ENCODE measurements at regions of chr3 and their contacts with region 1.

Region 1: GRCh38 chr3:82133070-82133606 is 371.7 kb upstream of the GBE1 start:
- DNase-seq: peak; percentile 15 to 64
- H3K4me3 ChIP-seq: no peak overlapping the region
- H3K27ac ChIP-seq: no peak overlapping the region
- H3K4me1 ChIP-seq: no peaks in the 10 kb centered on the region
- H3K27me3 ChIP-seq: no peaks in the 10 kb centered on the region
- CTCF ChIP-seq: peak; percentile 48 to 78 (median 58)
- EP300 ChIP-seq: no peak
- POLR2A ChIP-seq: no peak
- RAD21 ChIP-seq: peak; percentile 70 to 77

Region 2: GRCh38 chr3:82122554-82123345 is 10.4 kb before region 1 on chr3:
- CTCF ChIA-PET with region 1: interaction called, 18 read pairs
- POLR2A ChIA-PET with region 1: no interaction called
- DNase-seq: no peak
- H3K4me3 ChIP-seq: no peak overlapping the region
- H3K27ac ChIP-seq: no peak overlapping the region
- H3K4me1 ChIP-seq: no peaks in the 10 kb centered on the region
- H3K27me3 ChIP-seq: no peaks in the 10 kb centered on the region
- CTCF ChIP-seq: no peak
- EP300 ChIP-seq: no peak
- POLR2A ChIP-seq: no peak
- RAD21 ChIP-seq: no peak

Region 3: GRCh38 chr3:82143661-82144412 is 10.7 kb after region 1 on chr3:
- CTCF ChIA-PET with region 1: interaction called, 28 read pairs
- POLR2A ChIA-PET with region 1: no interaction called
- DNase-seq: no peak
- H3K4me3 ChIP-seq: no peak overlapping the region
- H3K27ac ChIP-seq: no peak overlapping the region
- H3K4me1 ChIP-seq: 0 out of 7 replicates have a peak, but pooled peaks cover 0 to 2% (median 0%) of the 10 kb centered on the region in 4 experiments
- H3K27me3 ChIP-seq: no peaks in the 10 kb centered on the region
- CTCF ChIP-seq: no peak
- EP300 ChIP-seq: no peak
- POLR2A ChIP-seq: no peak
- RAD21 ChIP-seq: no peak

Region 4: DNA sequence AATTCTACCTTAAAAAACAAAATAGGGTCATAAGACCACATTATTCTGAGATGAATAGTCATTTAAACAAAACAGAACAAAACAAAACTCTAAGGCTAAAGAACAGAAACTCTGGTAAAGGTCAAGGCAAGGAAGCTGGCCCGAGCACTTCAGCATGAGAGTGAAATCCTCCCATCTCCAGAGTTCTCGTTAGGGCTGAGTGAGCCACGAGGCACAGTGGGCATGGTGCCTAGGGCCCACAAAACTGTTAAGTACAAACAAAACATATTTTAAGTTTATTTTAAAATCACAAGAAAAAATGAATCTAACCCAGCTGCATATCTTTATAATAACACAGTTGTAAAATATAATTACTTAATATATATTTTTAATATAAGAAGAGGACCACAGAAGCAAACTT is 46.2 kb after region 1 on chr3:
- CTCF ChIA-PET with region 1: no interaction called
- POLR2A ChIA-PET with region 1: no interaction called
- DNase-seq: no peak
- H3K4me3 ChIP-seq: no peak overlapping the region
- H3K27ac ChIP-seq: no peak overlapping the region
- H3K4me1 ChIP-seq: no peaks in the 10 kb centered on the region
- H3K27me3 ChIP-seq: no peaks in the 10 kb centered on the region
- CTCF ChIP-seq: no peak
- EP300 ChIP-seq: no peak
- POLR2A ChIP-seq: no peak
- RAD21 ChIP-seq: no peak

Region 5: DNA sequence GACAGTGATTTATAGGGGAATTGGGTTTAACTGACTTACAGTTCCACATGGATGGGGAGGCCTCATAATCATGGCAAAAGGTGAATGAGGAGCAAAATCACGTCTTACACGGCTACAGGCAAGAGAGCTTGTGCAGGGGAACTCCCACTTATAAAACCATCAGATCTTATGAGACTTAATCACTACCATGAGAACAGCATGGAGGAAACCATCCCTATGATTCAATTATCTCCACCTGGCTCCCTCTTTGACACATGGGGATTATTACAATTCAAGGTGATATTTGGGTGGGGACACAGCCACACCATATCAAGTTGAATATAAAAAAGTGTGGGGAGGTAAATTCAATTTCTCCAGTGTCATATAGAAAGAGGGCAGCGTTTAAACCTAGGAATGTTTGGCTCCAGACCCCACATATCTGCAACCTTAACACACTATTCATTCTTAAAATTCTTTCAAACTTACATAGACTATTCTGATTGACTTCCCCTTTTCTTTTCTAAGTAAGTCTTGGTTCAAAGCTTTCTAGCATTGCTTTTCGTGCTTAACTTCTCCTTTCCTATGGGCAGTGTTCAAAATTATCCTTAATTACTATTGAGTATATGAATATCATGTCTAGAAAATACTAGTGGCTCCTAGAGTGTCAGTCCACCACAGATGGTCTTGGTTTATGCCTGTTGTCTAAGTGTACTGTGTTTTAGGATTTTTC is 75.0 kb after region 1 on chr3:
- CTCF ChIA-PET with region 1: no interaction called
- POLR2A ChIA-PET with region 1: no interaction called
- DNase-seq: no peak
- H3K4me3 ChIP-seq: no peak overlapping the region
- H3K27ac ChIP-seq: no peak overlapping the region
- H3K4me1 ChIP-seq: no peaks in the 10 kb centered on the region
- H3K27me3 ChIP-seq: no peaks in the 10 kb centered on the region
- CTCF ChIP-seq: no peak
- EP300 ChIP-seq: no peak
- POLR2A ChIP-seq: no peak
- RAD21 ChIP-seq: no peak

Region 6: GRCh38 chr3:82224661-82225060 is 91.5 kb after region 1 on chr3:
- CTCF ChIA-PET with region 1: no interaction called
- POLR2A ChIA-PET with region 1: no interaction called
- DNase-seq: no peak
- H3K4me3 ChIP-seq: no peak overlapping the region
- H3K27ac ChIP-seq: no peak overlapping the region
- H3K4me1 ChIP-seq: no peaks in the 10 kb centered on the region
- H3K27me3 ChIP-seq: no peaks in the 10 kb centered on the region
- CTCF ChIP-seq: no peak
- EP300 ChIP-seq: no peak
- POLR2A ChIP-seq: no peak
- RAD21 ChIP-seq: no peak

Region 7: GRCh38 chr3:82306189-82306588 is 173.1 kb after region 1 on chr3:
- CTCF ChIA-PET with region 1: no interaction called
- POLR2A ChIA-PET with region 1: no interaction called
- DNase-seq: no peak
- H3K4me3 ChIP-seq: no peak overlapping the region
- H3K27ac ChIP-seq: no peak overlapping the region
- H3K4me1 ChIP-seq: no peaks in the 10 kb centered on the region
- H3K27me3 ChIP-seq: no peaks in the 10 kb centered on the region
- CTCF ChIP-seq: no peak
- EP300 ChIP-seq: no peak
- POLR2A ChIP-seq: no peak
- RAD21 ChIP-seq: no peak